ENCODE measurements at regions of chr17 and their contacts with region 1.

Region 1: DNA sequence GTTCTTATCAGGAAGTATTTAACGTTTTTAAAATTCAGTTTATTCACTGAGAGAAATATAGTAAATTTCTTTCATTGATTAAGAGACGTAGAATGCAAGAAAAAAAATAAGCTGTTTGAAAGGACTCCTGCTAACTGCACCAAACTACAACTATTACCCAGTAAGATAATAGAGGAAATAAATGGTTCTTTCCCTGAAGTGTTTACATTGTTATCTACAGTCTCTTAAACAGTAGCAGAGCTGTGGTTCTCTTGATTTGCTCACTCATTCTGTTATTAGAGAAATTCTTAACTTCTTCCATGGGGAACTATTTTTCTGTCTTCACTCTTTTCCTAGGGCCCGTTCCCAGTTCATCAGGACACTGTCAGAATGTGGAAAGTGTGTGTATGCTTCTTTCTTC is 973.0 kb downstream of the KCNJ2 start:
- DNase-seq: no peak
- ATAC-seq: no peak
- H3K4me3 ChIP-seq: no peak overlapping the region
- H3K4me3 Mint-ChIP-seq: no peak overlapping the region
- H3K27ac ChIP-seq: no peak overlapping the region
- H3K27ac Mint-ChIP-seq: no peak overlapping the region
- H3K4me1 ChIP-seq: no peaks in the 10 kb centered on the region
- H3K4me1 Mint-ChIP-seq: no peaks in the 10 kb centered on the region
- H3K27me3 ChIP-seq: no peaks in the 10 kb centered on the region
- H3K27me3 Mint-ChIP-seq: no peaks in the 10 kb centered on the region
- CTCF ChIP-seq: no peak

Region 2: DNA sequence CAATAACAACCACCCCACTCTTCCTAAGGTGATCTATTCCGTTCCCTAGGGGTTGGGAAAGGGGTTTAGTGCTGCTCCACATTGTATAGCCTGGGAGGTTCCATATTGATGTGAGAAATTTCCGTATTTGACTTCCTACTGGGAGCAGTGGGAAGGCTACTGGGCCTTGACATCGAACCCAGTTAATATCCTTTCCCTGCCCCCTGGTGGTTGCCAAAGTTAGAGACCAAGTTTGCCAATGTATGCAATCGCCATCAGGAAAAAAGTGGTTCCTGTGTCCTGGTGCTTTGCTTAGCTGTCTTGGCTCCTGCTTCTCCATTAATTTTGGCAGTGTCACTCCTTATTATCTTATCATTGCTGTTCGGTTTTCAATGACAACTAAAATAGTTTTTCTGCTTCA is 58.1 kb before region 1 on chr17:
- CTCF ChIA-PET with region 1: no interaction called
- POLR2A ChIA-PET with region 1: no interaction called
- intact Hi-C with region 1: loop called in 1 of 2 experiments (anchors 10 kb)
- DNase-seq: no peak
- ATAC-seq: no peak
- H3K4me3 ChIP-seq: no peak overlapping the region
- H3K4me3 Mint-ChIP-seq: no peak overlapping the region
- H3K27ac ChIP-seq: no peak overlapping the region
- H3K27ac Mint-ChIP-seq: no peak overlapping the region
- H3K4me1 ChIP-seq: no peaks in the 10 kb centered on the region
- H3K4me1 Mint-ChIP-seq: no peaks in the 10 kb centered on the region
- H3K27me3 ChIP-seq: no peaks in the 10 kb centered on the region
- H3K27me3 Mint-ChIP-seq: no peaks in the 10 kb centered on the region
- CTCF ChIP-seq: no peak

Region 3: DNA sequence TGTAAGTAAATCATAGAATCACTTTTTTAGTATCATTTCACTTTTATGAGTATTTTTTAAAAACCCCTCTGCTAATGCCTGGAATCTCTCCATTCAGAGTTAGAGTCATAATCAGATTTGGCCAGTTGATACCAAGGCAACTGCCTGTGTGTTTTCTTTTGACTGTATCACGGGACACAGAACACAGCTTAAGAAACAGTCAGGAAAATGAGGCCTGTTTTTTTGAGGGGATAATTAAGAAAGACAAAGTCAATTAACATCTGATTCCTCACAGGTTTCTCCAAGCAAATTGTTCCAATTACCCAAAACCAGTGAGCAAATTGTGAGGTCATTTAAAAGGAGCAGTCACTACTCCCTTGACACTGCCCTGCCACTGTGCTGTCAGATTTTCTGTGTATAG is 34.0 kb after region 1 on chr17:
- CTCF ChIA-PET with region 1: no interaction called
- POLR2A ChIA-PET with region 1: no interaction called
- intact Hi-C with region 1: no loop called
- DNase-seq: no peak
- ATAC-seq: no peak
- H3K4me3 ChIP-seq: no peak overlapping the region
- H3K4me3 Mint-ChIP-seq: no peak overlapping the region
- H3K27ac ChIP-seq: no peak overlapping the region
- H3K27ac Mint-ChIP-seq: no peak overlapping the region
- H3K4me1 ChIP-seq: no peaks in the 10 kb centered on the region
- H3K4me1 Mint-ChIP-seq: no peaks in the 10 kb centered on the region
- H3K27me3 ChIP-seq: no peaks in the 10 kb centered on the region
- H3K27me3 Mint-ChIP-seq: no peaks in the 10 kb centered on the region
- CTCF ChIP-seq: no peak

Region 4: GRCh38 chr17:71398800-71399219 is 256.5 kb after region 1 on chr17:
- CTCF ChIA-PET with region 1: no interaction called
- POLR2A ChIA-PET with region 1: no interaction called
- intact Hi-C with region 1: no loop called
- DNase-seq: no peak
- ATAC-seq: no peak
- H3K4me3 ChIP-seq: no peak overlapping the region
- H3K4me3 Mint-ChIP-seq: no peak overlapping the region
- H3K27ac ChIP-seq: no peak overlapping the region
- H3K27ac Mint-ChIP-seq: no peak overlapping the region
- H3K4me1 ChIP-seq: no peaks in the 10 kb centered on the region
- H3K4me1 Mint-ChIP-seq: no peaks in the 10 kb centered on the region
- H3K27me3 ChIP-seq: no peaks in the 10 kb centered on the region
- H3K27me3 Mint-ChIP-seq: no peaks in the 10 kb centered on the region
- CTCF ChIP-seq: no peak